B cell (primary cell): ENCODE measurements at regions of chr1 and their contacts with region 1.

Region 1: GRCh38 chr1:211606914-211607755 is 28.2 kb upstream of the SLC30A1 start:
- DNase-seq: peak; percentile 75
- ATAC-seq: peak; percentile 82
- H3K4me3 ChIP-seq: peak overlapping the region; percentile 37 to 83 (median 67)
- H3K4me3 Mint-ChIP-seq: peak overlapping the region; percentile 90
- H3K27ac ChIP-seq: peak overlapping the region; percentile 36 to 79
- H3K27ac Mint-ChIP-seq: peak overlapping the region; percentile 90
- H3K4me1 ChIP-seq: peaks cover 18 to 23% of the 10 kb centered on the region in 2 donors
- H3K4me1 Mint-ChIP-seq: peaks cover 25% of the 10 kb centered on the region
- H3K27me3 ChIP-seq: no peaks in the 10 kb centered on the region
- H3K27me3 Mint-ChIP-seq: no peaks in the 10 kb centered on the region
- CTCF ChIP-seq: no peak

Region 2: GRCh38 chr1:211524521-211524920 is 82.6 kb before region 1 on chr1:
- CTCF ChIA-PET with region 1: no interaction called
- POLR2A ChIA-PET with region 1: no interaction called
- intact Hi-C with region 1: no loop called
- DNase-seq: no peak
- ATAC-seq: no peak
- H3K4me3 ChIP-seq: no peak overlapping the region
- H3K4me3 Mint-ChIP-seq: no peak overlapping the region
- H3K27ac ChIP-seq: no peak overlapping the region
- H3K27ac Mint-ChIP-seq: no peak overlapping the region
- H3K4me1 ChIP-seq: peaks cover 17 to 25% of the 10 kb centered on the region in 2 donors
- H3K4me1 Mint-ChIP-seq: peaks cover 21% of the 10 kb centered on the region
- H3K27me3 ChIP-seq: no peaks in the 10 kb centered on the region
- H3K27me3 Mint-ChIP-seq: peaks cover 3% of the 10 kb centered on the region
- CTCF ChIP-seq: no peak

Region 3: DNA sequence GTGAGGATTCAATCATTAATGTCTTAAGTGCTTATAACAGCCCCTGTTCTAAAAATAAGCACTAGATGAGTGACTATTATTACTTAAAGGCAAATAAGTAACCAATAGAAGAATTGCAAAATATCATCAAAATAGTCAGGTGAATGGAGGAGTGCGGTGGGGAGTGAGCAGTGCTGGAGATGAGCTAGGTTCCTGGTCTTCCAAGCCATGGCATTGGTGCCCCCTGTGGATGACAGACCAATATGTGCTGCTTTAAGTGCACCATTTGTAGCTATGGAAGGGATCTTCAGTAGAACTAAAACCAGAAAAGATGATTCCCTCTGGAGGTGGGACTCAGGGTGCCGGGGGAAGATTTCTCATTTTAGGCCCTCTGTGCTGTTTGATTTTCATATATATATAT is 17.9 kb after region 1 on chr1:
- CTCF ChIA-PET with region 1: interaction called, 11 read pairs
- POLR2A ChIA-PET with region 1: interaction called, 6 read pairs
- intact Hi-C with region 1: no loop called
- DNase-seq: peak; percentile 55
- ATAC-seq: peak; percentile 69
- H3K4me3 ChIP-seq: no peak overlapping the region
- H3K4me3 Mint-ChIP-seq: no peak overlapping the region
- H3K27ac ChIP-seq: no peak overlapping the region
- H3K27ac Mint-ChIP-seq: no peak overlapping the region
- H3K4me1 ChIP-seq: no peaks in the 10 kb centered on the region
- H3K4me1 Mint-ChIP-seq: no peaks in the 10 kb centered on the region
- H3K27me3 ChIP-seq: no peaks in the 10 kb centered on the region
- H3K27me3 Mint-ChIP-seq: peaks cover 14% of the 10 kb centered on the region
- CTCF ChIP-seq: peak; percentile 32

Region 4: DNA sequence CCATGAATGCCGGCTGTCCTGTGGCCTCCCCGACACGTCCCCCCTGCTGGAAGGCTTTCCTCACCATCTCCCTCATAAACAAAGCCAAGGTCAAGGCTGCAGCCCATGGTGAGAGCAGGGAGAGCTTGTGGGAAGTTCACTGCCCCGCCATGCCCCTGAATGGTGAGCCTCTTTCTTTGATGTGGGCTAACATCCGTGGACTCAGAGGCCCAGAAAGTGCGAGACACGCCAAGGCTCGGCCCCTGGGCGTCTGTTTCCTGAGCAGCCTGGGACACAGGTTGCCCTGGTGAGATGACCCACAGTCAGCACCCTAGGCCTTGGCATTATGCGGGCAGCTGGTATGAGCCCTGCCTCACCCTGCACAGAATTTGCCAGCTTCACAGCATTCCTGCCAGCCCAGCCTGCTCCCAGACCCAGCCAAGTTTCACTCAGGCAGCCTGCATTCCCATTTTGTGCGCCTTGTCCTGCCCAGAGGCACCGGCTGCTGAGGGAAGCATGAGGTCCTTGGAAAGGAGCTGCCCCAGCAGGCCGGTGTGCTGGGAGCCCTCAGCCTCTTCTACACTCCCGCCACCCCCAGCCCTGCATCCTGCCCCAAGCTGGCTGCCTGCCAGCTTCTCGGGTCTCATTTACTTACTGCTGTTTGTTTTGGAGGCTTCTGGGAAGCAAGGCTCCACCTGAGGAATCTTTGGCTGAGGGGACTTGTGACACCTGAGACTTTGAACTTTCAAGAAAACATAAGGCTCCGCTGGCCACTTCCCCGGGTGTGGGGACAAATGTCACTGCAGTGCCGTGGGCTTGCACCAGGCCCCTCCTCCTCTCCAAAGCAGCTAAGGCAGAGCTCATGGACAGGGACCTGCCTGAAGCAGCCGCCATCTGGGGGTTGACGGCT is 36.4 kb after region 1 on chr1:
- CTCF ChIA-PET with region 1: no interaction called
- POLR2A ChIA-PET with region 1: no interaction called
- intact Hi-C with region 1: no loop called
- DNase-seq: no peak
- ATAC-seq: no peak
- H3K4me3 ChIP-seq: no peak overlapping the region
- H3K4me3 Mint-ChIP-seq: no peak overlapping the region
- H3K27ac ChIP-seq: no peak overlapping the region
- H3K27ac Mint-ChIP-seq: no peak overlapping the region
- H3K4me1 ChIP-seq: no peaks in the 10 kb centered on the region
- H3K4me1 Mint-ChIP-seq: no peaks in the 10 kb centered on the region
- H3K27me3 ChIP-seq: peaks cover 0 to 6% (median 0%) of the 10 kb centered on the region in 4 experiments
- H3K27me3 Mint-ChIP-seq: peaks cover 4% of the 10 kb centered on the region
- CTCF ChIP-seq: no peak